Caco-2 (cell line): ENCODE measurements at regions of chr16 and their contacts with region 1.

Region 1: DNA sequence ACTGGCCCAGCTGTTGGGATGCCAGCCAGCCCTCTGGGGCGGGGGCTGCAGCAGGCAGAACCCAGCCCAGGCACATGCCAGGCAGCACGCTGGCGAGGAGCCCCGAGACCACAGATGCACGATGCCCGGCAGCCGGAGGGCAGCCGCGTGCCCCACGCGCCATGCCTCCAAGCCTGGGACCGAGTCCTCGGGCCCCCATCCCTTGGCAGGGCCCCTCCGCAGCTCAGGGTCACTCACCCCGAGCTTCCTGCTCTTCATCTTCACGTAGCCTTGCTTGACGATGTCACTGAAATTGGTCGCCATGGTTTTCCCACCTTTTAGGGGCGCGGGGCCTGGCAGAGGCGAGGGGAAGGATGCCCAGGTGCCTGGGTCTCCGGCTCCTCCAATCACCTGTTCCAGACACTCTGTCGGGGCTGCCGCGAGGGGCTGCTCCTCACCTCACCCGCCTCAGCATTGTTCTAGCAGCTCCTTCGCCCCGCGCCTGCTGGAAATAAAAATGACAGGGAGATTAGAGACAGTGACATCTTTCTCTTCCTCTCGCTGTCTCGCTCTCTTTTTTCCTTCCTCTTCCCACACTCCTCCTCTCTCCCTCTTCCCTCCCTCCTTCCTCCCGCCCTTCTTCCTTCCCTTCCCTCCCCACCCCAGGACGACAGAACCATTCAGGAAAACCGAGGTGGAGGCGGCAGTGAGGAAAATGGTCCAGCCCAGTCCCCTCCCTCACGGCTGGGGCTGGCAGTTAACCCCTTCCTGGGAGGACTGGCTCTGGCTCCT is 6.9 kb downstream of the DOK4 start:
- DNase-seq: peak; percentile 88 to 89
- H3K4me3 ChIP-seq: peak overlapping the region; percentile 50
- H3K4me3 Mint-ChIP-seq: peak overlapping the region; percentile 89
- H3K27ac Mint-ChIP-seq: peak overlapping the region; percentile 100
- H3K4me1 ChIP-seq: peaks cover 45% of the 10 kb centered on the region
- H3K4me1 Mint-ChIP-seq: peaks cover 39% of the 10 kb centered on the region
- H3K27me3 ChIP-seq: no peaks in the 10 kb centered on the region
- H3K27me3 Mint-ChIP-seq: no peaks in the 10 kb centered on the region
- CTCF ChIP-seq: no peak

Region 2: GRCh38 chr16:56866943-56867830 is 612.2 kb before region 1 on chr16:
- CTCF ChIA-PET with region 1: no interaction called
- POLR2A ChIA-PET with region 1: no interaction called
- intact Hi-C with region 1: no loop called
- DNase-seq: peak in 1 of 2 experiments; percentile 68
- H3K4me3 ChIP-seq: no peak overlapping the region
- H3K4me3 Mint-ChIP-seq: no peak overlapping the region
- H3K27ac Mint-ChIP-seq: peak overlapping the region; percentile 60
- H3K4me1 ChIP-seq: peaks cover 38% of the 10 kb centered on the region
- H3K4me1 Mint-ChIP-seq: peaks cover 35% of the 10 kb centered on the region
- H3K27me3 ChIP-seq: no peaks in the 10 kb centered on the region
- H3K27me3 Mint-ChIP-seq: no peaks in the 10 kb centered on the region
- CTCF ChIP-seq: peak; percentile 76 to 83

Region 3: DNA sequence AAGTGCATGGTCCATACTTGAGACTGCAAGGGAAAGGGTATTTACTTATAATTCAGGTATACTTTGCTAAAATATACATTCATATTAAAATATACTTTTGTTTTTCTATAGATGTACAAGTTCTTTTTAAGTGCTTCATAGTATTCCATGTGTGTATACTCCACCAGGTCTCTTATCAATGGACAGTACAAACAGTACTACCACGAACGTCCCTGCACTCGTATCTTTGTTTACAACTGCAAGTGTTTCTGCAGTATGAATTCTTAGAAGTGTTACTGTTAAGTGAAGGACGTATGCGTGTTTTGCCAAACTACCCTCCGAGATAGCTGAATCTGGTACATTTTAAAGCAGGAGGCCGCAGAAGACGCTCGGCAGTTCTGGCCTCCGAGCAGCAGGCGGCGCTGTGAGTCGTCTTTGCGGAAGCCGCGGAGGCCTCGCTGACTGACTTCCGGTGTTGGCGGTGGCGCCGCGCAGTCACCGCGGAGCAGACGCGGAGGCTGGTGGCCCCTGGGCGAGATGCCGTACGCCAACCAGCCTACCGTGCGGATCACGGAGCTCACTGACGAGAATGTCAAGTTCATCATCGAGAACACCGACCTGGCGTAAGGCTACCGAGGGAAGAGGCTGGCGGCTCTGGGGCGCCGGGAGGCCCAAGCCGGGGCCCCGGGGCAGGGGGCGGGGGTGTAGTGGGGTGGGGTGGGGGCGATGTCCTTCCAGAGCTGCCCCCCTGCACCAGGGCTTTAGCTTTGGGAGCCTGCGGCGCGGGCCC is 17.0 kb before region 1 on chr16 and contains the start of gene POLR2C:
- CTCF ChIA-PET with region 1: interaction called, 17 read pairs
- POLR2A ChIA-PET with region 1: interaction called, 5 read pairs
- intact Hi-C with region 1: loop called (anchors 2 kb)
- DNase-seq: peak; percentile 88 to 95
- H3K4me3 ChIP-seq: peak within 1 kb of the TSS; percentile 73
- H3K4me3 Mint-ChIP-seq: peak within 1 kb of the TSS; percentile 85
- H3K27ac Mint-ChIP-seq: peak within 1 kb of the TSS; percentile 92
- H3K4me1 ChIP-seq: 0 out of 2 replicates have a peak, but pooled peaks cover 8% of the 10 kb centered on the region
- H3K4me1 Mint-ChIP-seq: no peaks in the 10 kb centered on the region
- H3K27me3 ChIP-seq: no peaks in the 10 kb centered on the region
- H3K27me3 Mint-ChIP-seq: no peaks in the 10 kb centered on the region
- CTCF ChIP-seq: peak; percentile 96 to 98
- total RNA-seq, gene POLR2C: 100 and 102 TPM in 2 replicates

Region 4: GRCh38 chr16:57500578-57501111 is 21.3 kb after region 1 on chr16:
- CTCF ChIA-PET with region 1: no interaction called
- POLR2A ChIA-PET with region 1: no interaction called
- intact Hi-C with region 1: no loop called
- DNase-seq: no peak
- H3K4me3 ChIP-seq: no peak overlapping the region
- H3K4me3 Mint-ChIP-seq: no peak overlapping the region
- H3K27ac Mint-ChIP-seq: peak overlapping the region; percentile 19
- H3K4me1 ChIP-seq: no peaks in the 10 kb centered on the region; the same call in 1 of the 2 replicates
- H3K4me1 Mint-ChIP-seq: peaks cover 7% of the 10 kb centered on the region
- H3K27me3 ChIP-seq: no peaks in the 10 kb centered on the region
- H3K27me3 Mint-ChIP-seq: no peaks in the 10 kb centered on the region
- CTCF ChIP-seq: no peak